K562 (cell line): ENCODE measurements at regions of chr9 and their contacts with region 1.

Region 1: DNA sequence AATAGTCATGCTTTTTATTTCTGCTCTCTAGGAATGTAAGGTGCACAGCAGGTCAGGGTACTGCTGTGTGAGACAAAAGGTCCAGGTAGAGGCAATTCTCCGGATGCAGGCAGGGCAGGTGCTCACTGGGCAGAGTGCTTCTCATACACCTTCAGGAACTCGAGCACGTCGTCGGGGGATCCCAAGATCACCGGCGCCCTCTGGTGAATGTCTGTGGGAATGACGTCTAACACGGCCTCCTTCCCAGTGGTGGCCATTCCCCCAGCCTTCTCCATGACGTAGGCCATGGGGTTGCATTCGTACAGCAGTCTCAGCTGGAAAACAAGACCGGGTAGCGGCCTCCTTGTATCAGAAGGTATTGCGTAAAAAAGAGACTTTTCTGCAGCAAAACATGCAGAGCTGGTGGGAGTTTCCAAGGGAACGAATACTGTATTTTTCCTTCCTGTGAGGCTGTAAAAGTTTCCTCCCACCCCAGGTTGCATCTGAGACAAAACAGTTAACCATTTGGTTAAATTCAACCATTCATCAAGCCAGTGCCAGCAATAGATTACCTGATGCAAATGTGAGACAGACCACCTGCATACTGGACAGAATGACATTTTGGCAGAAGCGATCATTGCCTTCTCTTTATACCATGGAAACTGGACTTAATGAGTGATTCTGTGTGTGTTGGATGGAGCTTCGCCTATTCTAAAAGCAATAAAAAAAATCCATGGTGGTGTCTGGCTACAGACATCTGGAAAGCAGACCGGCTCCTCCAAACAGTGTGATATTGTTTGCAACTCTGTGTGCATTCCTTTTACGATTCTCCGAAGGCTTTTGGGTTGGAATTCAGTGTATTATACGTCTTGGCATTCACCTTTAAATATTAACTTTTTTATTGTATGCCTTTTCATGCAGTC is 9.9 kb upstream of the FBP2 start:
- DNase-seq: peak; percentile 76 to 90 (median 87)
- ATAC-seq: peak; percentile 94
- H3K4me3 ChIP-seq: no peak overlapping the region
- H3K27ac ChIP-seq: no peak overlapping the region
- H3K4me1 ChIP-seq: 0 out of 5 replicates have a peak, but pooled peaks cover 0 to 3% of the 10 kb centered on the region in 2 experiments
- H3K27me3 ChIP-seq: peaks cover 35 to 73% of the 10 kb centered on the region in 2 experiments
- CTCF ChIP-seq: peak; percentile 77 to 84 (median 81)
- EP300 ChIP-seq: no peak
- POLR2A ChIP-seq: no peak
- RAD21 ChIP-seq: peak; percentile 69 to 86

Region 2: GRCh38 chr9:94623253-94623652 is 19.7 kb after region 1 on chr9:
- CTCF ChIA-PET with region 1: no interaction called
- POLR2A ChIA-PET with region 1: no interaction called
- in situ Hi-C with region 1: no loop called
- intact Hi-C with region 1: loop called (anchors 1 kb)
- DNase-seq: peak; percentile 67 to 74 (median 68)
- ATAC-seq: peak; percentile 98
- H3K4me3 ChIP-seq: no peak overlapping the region
- H3K27ac ChIP-seq: no peak overlapping the region
- H3K4me1 ChIP-seq: peaks cover 0 to 10% of the 10 kb centered on the region in 2 experiments; a peak in 2 of 5 replicates
- H3K27me3 ChIP-seq: peaks cover 22 to 46% of the 10 kb centered on the region in 2 experiments
- CTCF ChIP-seq: peak; percentile 73 to 81 (median 81)
- EP300 ChIP-seq: no peak
- POLR2A ChIP-seq: no peak
- RAD21 ChIP-seq: peak in 1 of 2 experiments; percentile 65; a peak in 2 of 4 replicates